Aorta (tissue), 5 donors: ENCODE measurements at regions of chr15 and their contacts with region 1.

Region 1: DNA sequence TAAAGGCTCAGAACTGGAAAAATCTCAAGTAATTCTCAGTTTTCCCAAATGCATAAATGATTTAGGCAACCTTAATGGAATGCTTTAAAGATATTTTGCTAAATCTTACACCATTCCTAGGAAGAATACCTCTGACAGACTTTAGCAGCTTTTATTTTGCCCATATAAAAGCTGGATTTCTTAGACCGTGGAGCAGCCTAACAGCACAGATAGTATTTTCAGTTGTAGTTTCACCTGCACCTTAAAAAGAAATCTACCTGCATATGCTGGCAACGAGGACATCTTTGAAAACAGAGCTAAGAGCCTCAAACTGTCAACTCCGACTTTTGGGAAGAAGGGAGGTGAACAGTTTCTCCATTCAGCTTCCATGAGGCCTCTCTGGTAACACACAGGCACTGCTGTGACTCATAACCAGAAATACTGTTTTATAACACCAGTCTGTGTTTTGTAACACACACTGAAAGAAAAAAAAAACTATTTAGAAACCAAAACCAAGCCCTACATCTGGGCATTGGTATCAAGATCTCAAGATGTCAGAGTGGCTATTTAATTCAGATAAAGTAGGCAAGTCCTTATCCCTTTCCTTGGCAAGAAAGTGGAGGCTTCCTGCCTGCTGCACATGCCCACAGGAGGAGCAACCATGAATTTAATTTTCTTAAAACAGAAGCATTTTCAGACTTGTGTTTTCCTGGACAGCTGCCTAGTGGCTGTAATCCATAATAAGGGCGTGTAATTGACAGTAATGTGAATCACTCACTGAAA is 181.5 kb upstream of the ICE2 start:
- DNase-seq: no peak
- ATAC-seq: peak; percentile 85
- H3K4me3 ChIP-seq: no peak overlapping the region
- H3K27ac ChIP-seq: peak overlapping the region in 1 of 2 donors; percentile 88
- H3K4me1 ChIP-seq: no peaks in the 10 kb centered on the region
- H3K27me3 ChIP-seq: no peaks in the 10 kb centered on the region

Region 2: DNA sequence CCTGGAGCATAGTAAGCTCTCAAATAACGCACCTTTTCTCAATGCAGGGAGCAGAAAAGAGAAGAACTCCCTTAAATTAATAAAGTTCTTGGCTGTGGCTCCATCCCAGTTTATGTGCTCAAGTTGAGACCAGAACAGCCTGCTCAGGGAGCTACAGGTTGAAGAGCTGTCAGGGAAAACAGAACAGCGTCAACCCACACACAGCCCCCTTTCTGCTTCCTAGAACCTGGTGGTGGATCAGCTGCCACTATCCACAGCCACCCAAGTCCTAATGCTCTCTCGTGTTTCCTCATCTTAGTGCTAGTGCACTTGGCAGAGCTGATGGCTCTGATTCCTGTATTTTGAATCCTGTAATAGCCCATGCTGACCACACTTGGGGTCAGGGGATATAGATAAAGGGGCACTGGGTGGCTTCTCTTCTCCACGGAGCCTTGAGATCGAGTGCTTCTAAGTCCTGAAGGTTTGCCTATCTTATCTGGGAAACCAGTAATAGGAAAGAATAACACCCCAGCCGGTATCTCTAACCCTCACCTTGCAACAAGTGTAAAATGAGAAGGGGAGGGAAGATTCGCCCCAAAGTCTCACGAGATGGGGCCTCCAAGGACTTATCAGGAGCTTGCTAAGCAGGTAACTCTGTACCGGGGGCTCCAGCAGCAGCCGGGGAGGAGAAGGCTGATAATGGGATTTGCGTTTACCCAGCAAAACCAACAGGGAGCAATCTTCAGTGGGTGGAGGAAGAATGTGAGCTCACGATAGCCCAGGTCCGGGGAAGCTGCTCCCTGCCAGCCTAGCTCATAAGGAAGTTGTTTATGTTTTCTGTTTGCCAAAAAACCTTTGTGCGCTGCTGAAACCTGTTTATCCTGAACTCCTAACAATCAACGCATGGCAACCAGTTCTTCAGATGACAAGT is 45.4 kb before region 1 on chr15:
- intact Hi-C with region 1: loop called in 1 of 2 experiments (anchors 5 kb)
- DNase-seq: no peak
- ATAC-seq: no peak
- H3K4me3 ChIP-seq: no peak overlapping the region
- H3K27ac ChIP-seq: no peak overlapping the region
- H3K4me1 ChIP-seq: peaks cover 0 to 3% of the 10 kb centered on the region in 2 donors
- H3K27me3 ChIP-seq: no peaks in the 10 kb centered on the region

Region 3: GRCh38 chr15:60787837-60788691 is 127.6 kb after region 1 on chr15:
- intact Hi-C with region 1: no loop called
- DNase-seq: no peak
- ATAC-seq: no peak
- H3K4me3 ChIP-seq: no peak overlapping the region
- H3K27ac ChIP-seq: no peak overlapping the region
- H3K4me1 ChIP-seq: no peaks in the 10 kb centered on the region
- H3K27me3 ChIP-seq: no peaks in the 10 kb centered on the region